ENCODE measurements at regions of chr2 and their contacts with region 1.

Region 1: GRCh38 chr2:152578573-152578972 is 138.7 kb downstream of the PRPF40A start:
- DNase-seq: no peak
- ATAC-seq: no peak
- H3K4me3 ChIP-seq: no peak overlapping the region
- H3K27ac ChIP-seq: no peak overlapping the region
- H3K4me1 ChIP-seq: no peaks in the 10 kb centered on the region
- H3K27me3 ChIP-seq: no peaks in the 10 kb centered on the region
- CTCF ChIP-seq: no peak

Region 2: GRCh38 chr2:152497481-152498052 is 81.0 kb before region 1 on chr2:
- CTCF ChIA-PET with region 1: no interaction called
- POLR2A ChIA-PET with region 1: no interaction called
- intact Hi-C with region 1: no loop called
- DNase-seq: peak; percentile 71
- ATAC-seq: peak; percentile 81
- H3K4me3 ChIP-seq: peak overlapping the region; percentile 13; the same call in 1 of the 2 replicates
- H3K27ac ChIP-seq: peak overlapping the region; percentile 53
- H3K4me1 ChIP-seq: peaks cover 18% of the 10 kb centered on the region
- H3K27me3 ChIP-seq: no peaks in the 10 kb centered on the region
- CTCF ChIP-seq: no peak

Region 3: DNA sequence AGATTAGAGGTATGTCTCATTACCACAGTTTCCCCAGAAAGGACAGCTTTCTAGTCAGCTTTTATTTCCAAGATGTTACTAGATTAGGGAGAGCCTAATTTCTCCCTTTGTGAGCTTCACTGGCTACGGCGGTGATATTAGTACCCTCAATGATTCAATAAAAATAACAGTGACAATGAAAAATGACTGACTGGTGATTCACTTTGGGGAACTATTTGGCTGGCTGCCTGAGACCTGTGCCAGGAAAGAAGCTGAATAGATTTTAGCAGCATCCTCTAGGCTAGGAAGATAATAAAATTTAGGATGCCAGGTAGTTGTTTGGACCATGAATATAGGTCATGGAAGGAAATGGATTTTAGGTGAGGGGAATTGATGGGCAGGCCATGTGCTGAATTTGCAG is 64.9 kb before region 1 on chr2:
- CTCF ChIA-PET with region 1: no interaction called
- POLR2A ChIA-PET with region 1: no interaction called
- intact Hi-C with region 1: no loop called
- DNase-seq: peak; percentile 93
- ATAC-seq: peak; percentile 94
- H3K4me3 ChIP-seq: no peak overlapping the region
- H3K27ac ChIP-seq: peak overlapping the region; percentile 49
- H3K4me1 ChIP-seq: peaks cover 15% of the 10 kb centered on the region
- H3K27me3 ChIP-seq: no peaks in the 10 kb centered on the region
- CTCF ChIP-seq: no peak

Region 4: DNA sequence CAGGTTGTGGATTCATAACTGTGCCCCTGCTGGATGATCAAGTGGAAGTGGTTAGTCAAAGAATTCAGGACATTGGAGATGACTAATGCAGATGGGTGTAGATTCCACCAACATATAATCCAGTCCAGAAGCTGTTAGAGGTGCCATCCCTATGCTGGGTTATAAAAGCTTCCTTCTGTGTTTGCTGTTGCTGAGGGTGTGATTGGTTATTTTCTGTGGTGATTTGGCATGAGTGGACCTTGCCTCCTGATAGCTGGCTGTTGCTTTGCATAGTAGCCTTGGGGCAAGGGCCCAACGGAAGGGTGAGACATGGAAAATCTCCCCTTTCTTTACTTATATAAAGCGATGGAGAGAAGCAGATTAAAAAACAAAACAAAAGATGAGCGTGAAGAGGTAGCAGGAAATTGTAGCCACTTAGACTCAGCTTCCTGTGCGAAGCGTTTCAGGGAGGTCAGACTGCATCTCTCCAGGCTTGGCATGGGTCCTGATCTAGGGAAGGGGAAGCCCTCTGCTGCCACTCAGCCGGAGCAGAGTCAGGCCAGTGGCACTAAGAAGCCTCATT is 53.2 kb before region 1 on chr2:
- CTCF ChIA-PET with region 1: no interaction called
- POLR2A ChIA-PET with region 1: interaction called, 25 read pairs
- intact Hi-C with region 1: no loop called
- DNase-seq: peak; percentile 91
- ATAC-seq: peak; percentile 93
- H3K4me3 ChIP-seq: peak overlapping the region; percentile 22; the same call in 1 of the 2 replicates
- H3K27ac ChIP-seq: peak overlapping the region; percentile 65
- H3K4me1 ChIP-seq: peaks cover 56% of the 10 kb centered on the region
- H3K27me3 ChIP-seq: no peaks in the 10 kb centered on the region
- CTCF ChIP-seq: no peak

Region 5: DNA sequence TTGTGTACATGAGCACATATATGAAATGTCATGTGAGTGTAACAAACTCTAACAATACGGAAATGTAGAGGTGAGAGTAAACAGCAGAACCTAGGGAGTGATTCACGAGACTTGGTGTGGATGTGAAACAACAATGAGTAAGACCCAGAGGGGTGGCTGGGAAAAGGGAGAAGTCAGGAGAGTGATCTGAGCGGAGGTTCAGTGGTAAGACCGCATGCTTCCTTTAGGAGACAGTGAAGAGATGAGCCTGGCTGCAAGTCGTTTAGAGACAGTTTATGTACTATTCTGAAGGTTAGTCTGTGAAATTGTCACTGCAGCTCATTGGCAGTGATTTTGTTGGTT is 11.9 kb before region 1 on chr2:
- CTCF ChIA-PET with region 1: no interaction called
- POLR2A ChIA-PET with region 1: no interaction called
- intact Hi-C with region 1: no loop called
- DNase-seq: peak; percentile 64
- ATAC-seq: peak; percentile 78
- H3K4me3 ChIP-seq: no peak overlapping the region
- H3K27ac ChIP-seq: peak overlapping the region; percentile 36; the same call in 1 of the 2 replicates
- H3K4me1 ChIP-seq: peaks cover 36% of the 10 kb centered on the region
- H3K27me3 ChIP-seq: no peaks in the 10 kb centered on the region
- CTCF ChIP-seq: no peak

Region 6: GRCh38 chr2:153174183-153174582 is 595.6 kb after region 1 on chr2:
- CTCF ChIA-PET with region 1: no interaction called
- POLR2A ChIA-PET with region 1: no interaction called
- intact Hi-C with region 1: no loop called
- DNase-seq: no peak
- ATAC-seq: no peak
- H3K4me3 ChIP-seq: no peak overlapping the region
- H3K27ac ChIP-seq: no peak overlapping the region
- H3K4me1 ChIP-seq: no peaks in the 10 kb centered on the region
- H3K27me3 ChIP-seq: no peaks in the 10 kb centered on the region
- CTCF ChIP-seq: no peak